ENCODE measurements at regions of chr12 and their contacts with region 1.

Region 1: DNA sequence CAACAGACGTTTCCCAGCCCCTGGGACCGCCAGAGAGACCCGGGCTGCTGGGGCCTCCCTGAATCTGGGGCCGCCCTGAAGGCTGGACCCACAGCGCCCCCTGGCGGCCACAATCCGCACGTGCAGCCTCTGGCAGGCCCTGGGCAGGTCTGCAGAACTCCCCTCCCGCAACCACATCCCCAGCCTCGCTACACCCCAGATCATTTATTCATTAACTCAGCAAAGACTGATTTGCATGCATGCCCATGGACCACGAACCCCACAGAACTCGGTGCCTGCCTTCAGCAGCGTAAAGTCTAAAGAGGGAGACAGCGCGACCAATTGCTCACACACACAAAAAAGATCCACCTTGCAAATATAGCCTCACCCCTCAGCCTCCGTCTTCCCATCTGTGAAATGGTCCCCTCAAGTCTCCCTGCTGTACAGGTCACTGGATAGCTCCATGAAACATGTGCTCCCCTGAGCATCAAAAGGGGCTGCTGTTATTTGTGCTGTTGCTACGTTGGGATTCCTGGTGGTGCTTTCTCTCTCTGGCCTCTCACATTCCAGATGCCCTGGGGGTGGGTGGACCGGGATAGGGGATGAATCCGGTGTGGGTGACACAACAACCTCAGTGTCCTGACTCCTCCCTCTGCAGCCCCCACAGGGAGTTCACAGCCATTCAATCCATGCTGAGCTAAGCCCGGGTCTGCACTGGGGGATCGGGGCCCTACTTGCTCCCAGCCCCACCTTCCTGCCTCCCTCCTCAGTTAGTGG is 96.4 kb downstream of the SCARB1 start:
- DNase-seq: peak; percentile 73
- H3K4me3 Mint-ChIP-seq: no peak overlapping the region
- H3K27ac Mint-ChIP-seq: no peak overlapping the region
- H3K4me1 Mint-ChIP-seq: peaks cover 23% of the 10 kb centered on the region
- H3K27me3 Mint-ChIP-seq: peaks cover 24% of the 10 kb centered on the region

Region 2: DNA sequence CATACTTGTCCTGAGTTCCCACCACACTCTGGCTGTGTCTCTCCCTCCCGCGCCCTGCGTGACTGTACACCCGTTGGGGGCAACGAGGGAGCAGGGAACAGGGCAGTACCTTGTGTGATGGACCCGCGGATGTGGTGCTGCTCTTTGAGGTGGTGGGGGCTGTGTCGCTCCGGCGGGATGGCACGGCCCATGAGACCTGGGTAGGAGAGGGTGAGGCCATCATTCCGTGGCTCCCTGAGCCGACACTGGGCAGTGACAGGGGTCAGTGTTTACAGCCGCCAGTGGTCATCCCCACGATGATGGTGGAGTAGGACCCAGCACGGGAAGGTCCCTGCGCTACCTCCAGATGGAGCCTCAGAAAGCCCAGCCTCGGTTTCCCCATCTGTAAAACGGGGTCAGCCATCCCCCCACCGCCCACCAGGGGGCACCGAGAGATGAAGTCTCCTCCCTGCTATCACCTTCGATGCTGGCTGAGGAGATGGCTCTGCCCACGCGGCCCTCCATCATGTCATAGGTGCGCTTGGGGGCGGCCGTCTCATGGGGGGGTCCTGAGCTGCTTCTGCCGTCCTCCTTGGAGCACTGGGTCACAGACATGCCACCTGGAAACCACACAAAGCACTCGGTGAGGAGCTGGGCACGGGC is 419.4 kb before region 1 on chr12:
- intact Hi-C with region 1: loop called (anchors 2 kb)
- DNase-seq: no peak
- H3K4me3 Mint-ChIP-seq: no peak overlapping the region
- H3K27ac Mint-ChIP-seq: no peak overlapping the region
- H3K4me1 Mint-ChIP-seq: no peaks in the 10 kb centered on the region
- H3K27me3 Mint-ChIP-seq: no peaks in the 10 kb centered on the region

Region 3: GRCh38 chr12:124453419-124454351 is 313.6 kb before region 1 on chr12:
- intact Hi-C with region 1: loop called (anchors 5 kb)
- DNase-seq: peak; percentile 76
- H3K4me3 Mint-ChIP-seq: peak overlapping the region; percentile 51
- H3K27ac Mint-ChIP-seq: peak overlapping the region; percentile 67
- H3K4me1 Mint-ChIP-seq: peaks cover 35% of the 10 kb centered on the region
- H3K27me3 Mint-ChIP-seq: no peaks in the 10 kb centered on the region

Region 4: GRCh38 chr12:124599074-124599999 is 167.9 kb before region 1 on chr12:
- intact Hi-C with region 1: loop called (anchors 2 kb)
- DNase-seq: no peak
- H3K4me3 Mint-ChIP-seq: no peak overlapping the region
- H3K27ac Mint-ChIP-seq: peak overlapping the region; percentile 20
- H3K4me1 Mint-ChIP-seq: peaks cover 8% of the 10 kb centered on the region
- H3K27me3 Mint-ChIP-seq: peaks cover 41% of the 10 kb centered on the region

Region 5: DNA sequence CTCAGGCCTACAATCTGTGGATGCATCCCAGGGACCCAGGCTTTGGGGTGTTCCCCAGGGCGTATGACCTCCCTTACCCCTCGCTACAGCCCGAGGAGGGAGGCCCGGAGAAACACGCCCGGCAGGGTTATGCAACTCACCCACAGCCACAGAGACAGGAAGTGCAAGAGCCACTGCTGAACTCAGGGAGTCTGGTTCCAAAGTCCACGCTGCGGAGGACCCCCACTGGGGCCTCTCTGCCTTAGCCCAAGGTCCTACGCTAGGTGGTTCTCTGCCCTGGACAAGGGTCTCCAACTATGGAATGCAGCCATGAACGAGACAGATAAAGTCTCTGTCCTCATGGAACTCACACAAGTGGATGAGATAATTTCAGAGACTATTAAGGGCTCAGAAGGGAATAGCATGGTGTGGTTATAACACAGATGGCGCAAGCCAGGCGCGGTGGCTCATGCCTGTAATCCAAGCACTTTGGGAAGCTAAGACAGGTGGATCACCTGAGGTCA is 85.1 kb after region 1 on chr12:
- intact Hi-C with region 1: no loop called
- DNase-seq: no peak
- H3K4me3 Mint-ChIP-seq: no peak overlapping the region
- H3K27ac Mint-ChIP-seq: no peak overlapping the region
- H3K4me1 Mint-ChIP-seq: peaks cover 2% of the 10 kb centered on the region
- H3K27me3 Mint-ChIP-seq: no peaks in the 10 kb centered on the region